Gastrocnemius medialis (tissue), 4 donors: ENCODE measurements at regions of chr6 and their contacts with region 1.

Region 1: DNA sequence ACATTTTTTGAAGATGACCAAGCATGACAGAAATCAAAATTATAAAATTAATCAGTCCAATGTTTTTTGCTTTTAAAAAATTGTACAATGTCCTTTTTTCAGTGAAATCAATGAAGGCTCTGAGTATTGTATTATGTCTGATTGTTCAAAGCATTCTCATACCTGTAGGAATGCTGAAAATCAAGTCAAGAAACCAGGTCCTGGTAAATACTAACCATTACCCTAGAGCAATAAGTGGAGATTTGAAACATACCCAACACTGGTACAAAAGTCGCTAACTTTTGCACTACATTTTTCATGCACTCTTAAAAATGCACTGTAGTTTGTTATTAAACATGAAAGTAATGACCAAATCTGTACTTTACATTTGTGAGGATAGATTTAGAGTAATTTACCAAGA is 1348.1 kb downstream of the HACE1 start:
- DNase-seq: no peak
- ATAC-seq: no peak
- H3K4me3 ChIP-seq: no peak overlapping the region
- H3K27ac ChIP-seq: no peak overlapping the region
- H3K4me1 ChIP-seq: no peaks in the 10 kb centered on the region
- H3K27me3 ChIP-seq: no peaks in the 10 kb centered on the region
- CTCF ChIP-seq: no peak
- POLR2A ChIP-seq: no peak

Region 2: GRCh38 chr6:103707596-103708325 is 196.2 kb after region 1 on chr6:
- in situ Hi-C with region 1: no loop called
- intact Hi-C with region 1: loop called (anchors 5 kb)
- DNase-seq: no peak
- ATAC-seq: no peak
- H3K4me3 ChIP-seq: no peak overlapping the region
- H3K27ac ChIP-seq: no peak overlapping the region
- H3K4me1 ChIP-seq: no peaks in the 10 kb centered on the region
- H3K27me3 ChIP-seq: no peaks in the 10 kb centered on the region
- CTCF ChIP-seq: no peak
- POLR2A ChIP-seq: no peak